B cell (primary cell): ENCODE measurements at regions of chr9 and their contacts with region 1.

Region 1: DNA sequence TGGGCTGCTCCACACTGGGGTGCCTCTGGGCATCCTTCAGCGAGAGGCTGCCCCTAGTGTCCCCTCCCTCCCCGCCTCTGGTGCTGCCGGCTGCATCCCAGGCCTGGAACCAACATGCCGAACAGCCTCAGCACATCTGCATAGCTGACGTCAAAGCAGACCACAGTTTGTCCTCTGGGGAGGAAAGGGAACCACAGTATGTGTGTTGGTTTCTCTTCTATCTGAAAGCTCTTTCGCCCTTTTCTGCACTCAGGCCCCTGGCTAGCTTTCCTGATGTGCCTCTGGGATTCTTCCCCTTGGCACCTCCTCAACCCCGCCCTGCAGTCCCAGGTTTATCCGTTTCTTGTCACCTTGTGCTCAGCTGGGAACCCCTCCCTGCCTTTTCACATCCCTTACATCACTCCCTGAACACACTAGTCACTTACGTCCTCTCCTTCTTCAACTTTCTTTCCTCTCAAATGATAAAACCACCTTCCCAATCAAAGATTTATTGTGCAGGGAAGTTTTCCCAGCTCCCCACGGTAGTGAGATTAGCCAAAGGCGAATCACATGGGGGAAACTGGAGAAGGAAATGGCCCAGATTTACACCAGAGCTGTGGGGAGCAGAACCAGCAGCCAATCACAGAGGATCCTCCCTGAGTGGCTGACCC is 35.5 kb upstream of the B4GALT1 start:
- DNase-seq: peak; percentile 91
- ATAC-seq: peak; percentile 99
- H3K4me3 ChIP-seq: peak overlapping the region in 1 of 5 experiments; percentile 4
- H3K4me3 Mint-ChIP-seq: peak overlapping the region; percentile 86
- H3K27ac ChIP-seq: peak overlapping the region in 1 of 2 donors; percentile 39
- H3K27ac Mint-ChIP-seq: peak overlapping the region; percentile 87
- H3K4me1 ChIP-seq: peaks cover 14 to 16% of the 10 kb centered on the region in 2 donors
- H3K4me1 Mint-ChIP-seq: peaks cover 20% of the 10 kb centered on the region
- H3K27me3 ChIP-seq: no peaks in the 10 kb centered on the region
- H3K27me3 Mint-ChIP-seq: no peaks in the 10 kb centered on the region
- CTCF ChIP-seq: no peak

Region 2: GRCh38 chr9:33106827-33107621 is 95.7 kb before region 1 on chr9:
- CTCF ChIA-PET with region 1: interaction called, 3 read pairs
- POLR2A ChIA-PET with region 1: interaction called, 14 read pairs
- intact Hi-C with region 1: no loop called
- DNase-seq: no peak
- ATAC-seq: peak; percentile 22
- H3K4me3 ChIP-seq: no peak overlapping the region
- H3K4me3 Mint-ChIP-seq: no peak overlapping the region
- H3K27ac ChIP-seq: no peak overlapping the region
- H3K27ac Mint-ChIP-seq: peak overlapping the region; percentile 67
- H3K4me1 ChIP-seq: peaks cover 4 to 22% of the 10 kb centered on the region in 2 donors
- H3K4me1 Mint-ChIP-seq: peaks cover 52% of the 10 kb centered on the region
- H3K27me3 ChIP-seq: no peaks in the 10 kb centered on the region
- H3K27me3 Mint-ChIP-seq: no peaks in the 10 kb centered on the region
- CTCF ChIP-seq: no peak

Region 3: GRCh38 chr9:33130508-33130911 is 72.2 kb before region 1 on chr9:
- CTCF ChIA-PET with region 1: interaction called, 12 read pairs
- POLR2A ChIA-PET with region 1: no interaction called
- intact Hi-C with region 1: loop called (anchors 2 kb)
- DNase-seq: no peak
- ATAC-seq: peak; percentile 32
- H3K4me3 ChIP-seq: peak overlapping the region in 1 of 5 experiments; percentile 17
- H3K4me3 Mint-ChIP-seq: peak overlapping the region; percentile 58
- H3K27ac ChIP-seq: peak overlapping the region; percentile 71 to 93
- H3K27ac Mint-ChIP-seq: peak overlapping the region; percentile 88
- H3K4me1 ChIP-seq: peaks cover 66 to 81% of the 10 kb centered on the region in 2 donors
- H3K4me1 Mint-ChIP-seq: peaks cover 92% of the 10 kb centered on the region
- H3K27me3 ChIP-seq: no peaks in the 10 kb centered on the region
- H3K27me3 Mint-ChIP-seq: no peaks in the 10 kb centered on the region
- CTCF ChIP-seq: no peak